ENCODE measurements at regions of chr15 and their contacts with region 1.

Region 1: DNA sequence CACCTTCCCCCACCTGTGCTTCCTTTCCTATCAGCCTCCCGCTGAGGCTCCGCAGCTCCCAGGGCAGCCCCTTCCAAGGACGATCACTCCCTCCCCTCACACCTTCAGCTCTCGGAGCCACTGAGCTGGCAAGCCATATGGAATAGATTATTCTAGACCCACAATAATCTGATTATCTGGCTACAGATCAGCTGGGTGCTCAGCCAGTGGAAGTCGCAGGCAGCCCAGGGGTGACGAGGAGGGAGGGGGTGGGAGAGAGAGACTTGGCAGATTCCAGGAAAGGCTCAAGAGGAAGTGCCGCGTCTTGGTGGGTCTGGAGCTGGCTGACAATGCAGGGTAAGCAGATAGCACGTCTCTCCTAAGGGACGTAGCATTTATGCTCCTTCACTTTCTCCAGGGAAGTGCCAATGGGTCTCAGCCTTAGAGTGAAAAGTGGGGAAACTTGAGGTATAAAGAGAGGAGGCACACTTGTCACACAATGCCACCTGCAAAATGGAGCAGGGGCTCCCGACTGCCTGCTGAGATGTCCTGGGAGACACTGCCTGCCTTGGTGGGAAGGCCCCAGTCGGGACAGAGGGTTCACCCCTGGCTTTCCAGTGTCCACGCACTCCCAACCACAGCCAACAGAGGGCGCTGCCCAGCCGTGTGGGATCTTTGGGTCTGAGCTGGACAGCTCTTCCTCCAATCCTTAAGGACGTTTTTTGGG is 9.4 kb upstream of the MESP1 start:
- DNase-seq: peak; percentile 42 to 68
- ATAC-seq: peak; percentile 85 to 93
- H3K4me3 ChIP-seq: no peak overlapping the region
- H3K27ac ChIP-seq: no peak overlapping the region
- H3K4me1 ChIP-seq: peaks cover 0 to 10% of the 10 kb centered on the region in 2 donors
- H3K27me3 ChIP-seq: no peaks in the 10 kb centered on the region
- CTCF ChIP-seq: peak; percentile 81 to 97 (median 93)
- POLR2A ChIP-seq: no peak

Region 2: GRCh38 chr15:89874926-89875564 is 114.6 kb after region 1 on chr15:
- in situ Hi-C with region 1: loop called (anchors 5 kb)
- intact Hi-C with region 1: loop called (anchors 1 kb)
- DNase-seq: peak; percentile 56 to 75
- ATAC-seq: peak; percentile 79 to 92
- H3K4me3 ChIP-seq: no peak overlapping the region
- H3K27ac ChIP-seq: no peak overlapping the region
- H3K4me1 ChIP-seq: peaks cover 3 to 6% of the 10 kb centered on the region in 2 donors
- H3K27me3 ChIP-seq: no peaks in the 10 kb centered on the region
- CTCF ChIP-seq: peak; percentile 85 to 93 (median 88)
- POLR2A ChIP-seq: no peak

Region 3: DNA sequence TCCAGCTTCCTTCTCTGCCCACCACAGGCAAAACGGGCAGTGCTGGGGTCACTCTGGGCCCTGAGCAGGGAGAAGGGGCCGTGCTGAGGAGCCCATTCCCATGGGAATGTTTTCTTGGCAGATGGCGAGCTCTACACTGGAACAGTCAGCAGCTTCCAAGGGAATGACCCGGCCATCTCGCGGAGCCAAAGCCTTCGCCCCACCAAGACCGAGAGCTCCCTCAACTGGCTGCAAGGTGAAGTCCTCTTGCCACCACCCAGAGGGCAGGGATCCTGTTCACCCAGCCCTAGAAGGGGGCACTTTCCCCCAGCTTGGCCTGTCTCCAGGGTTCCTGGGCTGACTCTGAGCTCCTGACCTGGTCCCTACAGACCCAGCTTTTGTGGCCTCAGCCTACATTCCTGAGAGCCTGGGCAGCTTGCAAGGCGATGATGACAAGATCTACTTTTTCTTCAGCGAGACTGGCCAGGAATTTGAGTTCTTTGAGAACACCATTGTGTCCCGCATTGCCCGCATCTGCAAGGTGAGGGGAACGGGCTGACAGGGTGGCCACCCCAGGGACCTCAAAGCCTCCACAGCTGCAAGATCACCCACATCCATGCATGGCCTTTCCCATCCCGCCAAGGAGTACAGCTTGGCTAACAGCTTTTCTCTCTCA is 460.9 kb after region 1 on chr15:
- in situ Hi-C with region 1: no loop called
- intact Hi-C with region 1: loop called (anchors 10 kb)
- DNase-seq: peak; percentile 75 to 80
- ATAC-seq: peak; percentile 91 to 94
- H3K4me3 ChIP-seq: no peak overlapping the region
- H3K27ac ChIP-seq: peak overlapping the region in 3 of 4 donors; percentile 20 to 42 (median 37)
- H3K4me1 ChIP-seq: peaks cover 6 to 9% of the 10 kb centered on the region in 2 donors
- H3K27me3 ChIP-seq: no peaks in the 10 kb centered on the region
- CTCF ChIP-seq: peak; percentile 51 to 91 (median 86)
- POLR2A ChIP-seq: no peak